Colonic mucosa (tissue), 4 donors: ENCODE measurements at regions of chr14 and their contacts with region 1.

Region 1: GRCh38 chr14:67704484-67705089 is 2.9 kb downstream of the RDH12 start:
- DNase-seq: peak; percentile 40
- H3K4me3 ChIP-seq: no peak overlapping the region
- H3K27ac ChIP-seq: no peak overlapping the region
- H3K4me1 ChIP-seq: no peaks in the 10 kb centered on the region
- H3K27me3 ChIP-seq: no peaks in the 10 kb centered on the region
- CTCF ChIP-seq: peak; percentile 52

Region 2: DNA sequence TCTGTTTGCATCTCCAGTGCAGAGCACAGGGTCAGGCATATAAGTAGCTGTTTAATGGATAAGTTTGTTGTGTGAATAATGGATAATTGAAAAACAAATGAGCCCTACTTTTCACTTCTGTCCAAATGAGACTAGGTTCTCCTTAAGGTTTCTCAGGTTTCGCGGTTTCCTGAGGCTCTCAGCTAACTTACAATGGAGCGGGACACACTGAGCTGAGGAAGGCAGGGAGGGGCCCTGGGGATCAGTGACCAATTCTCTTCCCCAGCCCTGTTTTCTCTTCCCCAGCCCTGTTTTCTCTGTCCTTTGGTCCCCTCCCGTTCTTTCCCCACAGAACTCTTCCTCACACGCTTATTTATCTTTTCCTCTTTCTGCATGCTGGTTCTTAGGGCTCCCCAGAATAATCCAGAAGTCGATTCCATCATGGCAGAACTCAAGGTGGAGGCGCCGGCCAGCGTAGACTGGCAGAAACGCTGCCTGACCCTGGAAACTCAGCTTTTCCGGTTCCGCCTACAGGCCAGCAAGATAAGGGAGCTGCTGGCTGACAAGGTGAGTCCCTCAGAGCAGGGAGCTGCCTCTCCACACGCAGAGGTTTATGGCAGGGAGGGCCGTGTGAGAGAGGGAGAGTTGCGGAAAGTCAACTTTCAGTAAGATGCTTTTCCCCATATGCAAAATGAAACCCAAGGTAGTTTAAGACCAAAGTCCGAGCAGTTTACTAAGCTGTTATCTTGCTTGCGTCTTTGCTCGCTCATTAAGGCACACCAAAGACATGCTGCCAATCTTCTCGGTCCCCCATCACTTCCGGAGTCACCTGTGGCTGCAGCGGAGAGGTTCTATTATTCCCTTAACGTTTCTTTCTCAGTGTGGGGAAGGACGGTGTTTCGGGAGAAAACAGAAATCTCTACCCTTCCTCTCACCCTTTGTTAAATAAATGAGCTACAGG is 162.9 kb before region 1 on chr14:
- intact Hi-C with region 1: no loop called
- DNase-seq: peak; percentile 89
- H3K4me3 ChIP-seq: peak overlapping the region; percentile 17
- H3K27ac ChIP-seq: peak overlapping the region; percentile 81
- H3K4me1 ChIP-seq: no peaks in the 10 kb centered on the region
- H3K27me3 ChIP-seq: no peaks in the 10 kb centered on the region
- CTCF ChIP-seq: no peak

Region 3: DNA sequence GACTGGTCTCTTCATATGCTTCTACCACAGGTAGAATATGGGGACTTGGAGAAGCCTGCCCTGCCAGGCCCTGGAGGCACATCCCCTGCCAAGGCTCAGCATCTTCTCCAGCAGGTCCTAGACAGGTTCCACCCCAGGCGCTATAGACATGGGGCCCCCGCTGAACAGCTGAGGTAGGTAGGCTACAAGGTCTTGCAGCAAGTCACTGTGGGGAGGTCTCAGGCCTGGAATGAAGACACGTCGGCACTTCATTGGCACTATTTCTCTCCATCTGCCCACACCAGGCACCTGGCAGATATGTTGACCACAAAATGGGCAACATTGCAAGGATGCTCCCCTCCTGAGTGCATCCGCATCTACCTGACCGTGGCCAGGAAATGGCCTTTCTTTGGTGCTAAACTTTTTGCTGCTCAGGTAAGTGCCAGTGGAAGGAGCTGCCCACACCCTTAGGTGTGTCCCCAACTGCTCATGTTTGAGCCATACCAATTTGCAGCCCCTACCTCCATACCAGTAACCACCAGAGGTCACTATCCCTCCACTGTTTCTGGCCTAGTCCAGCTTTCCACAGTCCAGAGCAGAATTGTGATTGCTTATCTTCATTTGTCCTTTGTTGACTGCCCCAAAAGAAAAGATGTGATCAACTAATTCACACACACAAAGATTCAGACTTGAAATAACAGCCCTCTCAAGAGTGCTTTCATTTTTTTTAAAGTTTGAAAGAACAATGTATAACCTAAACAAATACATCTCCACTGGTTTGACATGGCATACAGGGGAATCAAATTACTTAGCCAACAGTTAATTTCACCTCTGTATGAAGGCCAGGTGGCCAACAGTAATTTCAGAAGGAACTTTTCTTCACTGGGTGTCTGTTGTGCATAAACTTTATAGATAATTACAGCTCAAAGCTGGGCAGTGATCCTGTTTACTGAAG is 120.6 kb before region 1 on chr14:
- intact Hi-C with region 1: loop called (anchors 2 kb)
- DNase-seq: peak; percentile 40
- H3K4me3 ChIP-seq: no peak overlapping the region
- H3K27ac ChIP-seq: no peak overlapping the region
- H3K4me1 ChIP-seq: no peaks in the 10 kb centered on the region
- H3K27me3 ChIP-seq: no peaks in the 10 kb centered on the region
- CTCF ChIP-seq: peak; percentile 43